ENCODE measurements at regions of chr15 and their contacts with region 1.

Region 1: DNA sequence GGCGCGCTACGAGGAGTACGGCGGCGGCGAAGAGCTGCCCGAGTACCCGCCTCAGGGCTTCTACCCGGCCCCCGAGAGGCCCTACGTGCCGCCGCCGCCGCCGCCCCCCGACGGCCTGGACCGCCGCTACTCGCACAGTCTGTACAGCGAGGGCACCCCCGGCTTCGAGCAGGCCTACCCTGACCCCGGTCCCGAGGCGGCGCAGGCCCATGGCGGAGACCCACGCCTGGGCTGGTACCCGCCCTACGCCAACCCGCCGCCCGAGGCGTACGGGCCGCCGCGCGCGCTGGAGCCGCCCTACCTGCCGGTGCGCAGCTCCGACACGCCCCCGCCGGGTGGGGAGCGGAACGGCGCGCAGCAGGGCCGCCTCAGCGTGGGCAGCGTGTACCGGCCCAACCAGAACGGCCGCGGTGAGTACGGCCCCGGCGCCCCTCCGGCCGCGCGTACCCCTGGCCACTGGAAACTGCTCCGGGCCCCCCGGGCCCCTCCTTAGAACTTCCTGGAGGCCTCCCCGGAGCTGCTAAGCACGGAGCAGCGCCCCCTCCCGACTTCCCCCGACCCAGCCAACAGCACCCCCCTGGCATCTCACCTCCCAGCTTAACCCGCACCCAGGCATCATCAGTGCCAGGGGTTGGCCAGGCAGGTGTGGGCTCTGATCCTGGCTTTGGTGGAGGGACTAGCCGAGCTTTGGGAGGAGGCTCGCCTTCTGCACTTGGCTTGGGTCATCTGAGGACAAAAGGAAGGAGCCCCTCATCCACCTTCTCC is 1.4 kb downstream of the LOXL1 start:
- DNase-seq: peak; percentile 89
- ATAC-seq: peak; percentile 72
- H3K4me3 Mint-ChIP-seq: peak overlapping the region; percentile 87
- H3K27ac Mint-ChIP-seq: peak overlapping the region; percentile 83
- H3K4me1 Mint-ChIP-seq: peaks cover 57% of the 10 kb centered on the region
- H3K27me3 Mint-ChIP-seq: no peaks in the 10 kb centered on the region

Region 2: GRCh38 chr15:73518180-73518862 is 409.3 kb before region 1 on chr15:
- POLR2A ChIA-PET with region 1: no interaction called
- DNase-seq: no peak
- ATAC-seq: no peak
- H3K4me3 Mint-ChIP-seq: no peak overlapping the region
- H3K27ac Mint-ChIP-seq: no peak overlapping the region
- H3K4me1 Mint-ChIP-seq: peaks cover 2% of the 10 kb centered on the region
- H3K27me3 Mint-ChIP-seq: peaks cover 9% of the 10 kb centered on the region

Region 3: DNA sequence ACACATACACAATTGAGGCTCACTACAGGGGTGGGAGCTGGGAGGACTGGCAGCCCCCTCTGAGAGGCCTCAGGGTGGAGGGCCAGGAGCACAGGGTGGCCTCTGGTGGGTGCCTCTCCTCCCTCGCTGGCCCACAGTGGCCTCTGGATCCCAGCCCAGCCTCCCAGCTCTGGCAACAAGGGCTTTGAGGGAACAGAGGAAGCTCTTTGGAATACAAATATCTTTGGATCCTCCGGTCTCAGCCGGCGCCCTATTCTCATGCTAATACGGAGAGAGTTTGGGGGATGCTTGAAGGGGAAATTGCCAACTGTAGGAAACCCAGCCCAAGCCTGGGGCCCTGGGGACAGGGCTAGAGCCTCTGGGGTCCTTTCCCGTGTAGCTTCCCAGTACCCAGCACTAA is 141.1 kb before region 1 on chr15:
- POLR2A ChIA-PET with region 1: no interaction called
- DNase-seq: no peak
- ATAC-seq: no peak
- H3K4me3 Mint-ChIP-seq: no peak overlapping the region
- H3K27ac Mint-ChIP-seq: no peak overlapping the region
- H3K4me1 Mint-ChIP-seq: no peaks in the 10 kb centered on the region
- H3K27me3 Mint-ChIP-seq: peaks cover 8% of the 10 kb centered on the region

Region 4: GRCh38 chr15:73914145-73914544 is 13.5 kb before region 1 on chr15:
- POLR2A ChIA-PET with region 1: interaction called, 21 read pairs
- DNase-seq: peak; percentile 47
- ATAC-seq: peak; percentile 94
- H3K4me3 Mint-ChIP-seq: peak overlapping the region; percentile 56
- H3K27ac Mint-ChIP-seq: peak overlapping the region; percentile 86
- H3K4me1 Mint-ChIP-seq: peaks cover 25% of the 10 kb centered on the region
- H3K27me3 Mint-ChIP-seq: no peaks in the 10 kb centered on the region

Region 5: DNA sequence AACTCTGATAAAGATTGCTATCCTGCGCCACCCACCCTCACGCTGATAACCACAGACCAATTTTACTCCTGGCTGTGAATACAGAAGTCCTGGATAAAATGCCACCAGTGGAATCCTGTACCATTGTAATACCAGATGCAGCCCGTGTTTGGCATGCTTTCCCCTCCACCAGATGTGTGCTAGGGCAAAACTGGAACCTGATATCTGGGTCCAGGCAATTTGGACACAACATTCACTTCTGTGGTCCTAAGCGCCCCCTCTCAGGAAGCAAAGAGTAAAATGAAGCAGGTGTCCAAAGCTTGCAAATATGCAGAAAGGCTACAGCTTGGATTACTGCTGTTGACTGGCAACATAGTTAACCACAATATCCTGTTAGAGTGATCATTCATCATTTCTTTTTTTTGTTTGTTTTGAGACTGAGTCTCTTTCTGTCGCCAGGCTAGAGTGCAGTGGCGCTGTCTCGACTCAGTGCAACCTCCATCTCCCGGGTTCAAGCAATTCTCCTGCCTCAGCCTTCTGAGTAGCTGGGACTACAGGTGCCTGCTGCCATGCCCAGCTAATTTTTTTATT is 31.4 kb after region 1 on chr15:
- POLR2A ChIA-PET with region 1: interaction called, 17 read pairs
- DNase-seq: no peak
- ATAC-seq: peak; percentile 94
- H3K4me3 Mint-ChIP-seq: peak overlapping the region; percentile 43
- H3K27ac Mint-ChIP-seq: peak overlapping the region; percentile 87
- H3K4me1 Mint-ChIP-seq: peaks cover 24% of the 10 kb centered on the region
- H3K27me3 Mint-ChIP-seq: peaks cover 3% of the 10 kb centered on the region

Region 6: GRCh38 chr15:73964736-73965093 is 37.1 kb after region 1 on chr15:
- POLR2A ChIA-PET with region 1: interaction called, 17 read pairs
- DNase-seq: peak; percentile 93
- ATAC-seq: peak; percentile 85
- H3K4me3 Mint-ChIP-seq: peak overlapping the region; percentile 67
- H3K27ac Mint-ChIP-seq: peak overlapping the region; percentile 89
- H3K4me1 Mint-ChIP-seq: peaks cover 34% of the 10 kb centered on the region
- H3K27me3 Mint-ChIP-seq: no peaks in the 10 kb centered on the region